ENCODE measurements at regions of chr5 and their contacts with region 1.

Region 1: GRCh38 chr5:15597804-15598203 is 97.8 kb downstream of the FBXL7 start:
- DNase-seq: no peak
- ATAC-seq: no peak
- H3K4me3 ChIP-seq: no peak overlapping the region
- H3K27ac ChIP-seq: no peak overlapping the region
- H3K4me1 ChIP-seq: no peaks in the 10 kb centered on the region
- H3K27me3 ChIP-seq: no peaks in the 10 kb centered on the region
- CTCF ChIP-seq: no peak

Region 2: GRCh38 chr5:15618938-15619337 is 21.1 kb after region 1 on chr5:
- CTCF ChIA-PET with region 1: interaction called, 13 read pairs
- POLR2A ChIA-PET with region 1: no interaction called
- in situ Hi-C with region 1: no loop called
- intact Hi-C with region 1: no loop called
- DNase-seq: no peak
- ATAC-seq: no peak
- H3K4me3 ChIP-seq: no peak overlapping the region
- H3K27ac ChIP-seq: no peak overlapping the region
- H3K4me1 ChIP-seq: no peaks in the 10 kb centered on the region
- H3K27me3 ChIP-seq: no peaks in the 10 kb centered on the region
- CTCF ChIP-seq: no peak

Region 3: DNA sequence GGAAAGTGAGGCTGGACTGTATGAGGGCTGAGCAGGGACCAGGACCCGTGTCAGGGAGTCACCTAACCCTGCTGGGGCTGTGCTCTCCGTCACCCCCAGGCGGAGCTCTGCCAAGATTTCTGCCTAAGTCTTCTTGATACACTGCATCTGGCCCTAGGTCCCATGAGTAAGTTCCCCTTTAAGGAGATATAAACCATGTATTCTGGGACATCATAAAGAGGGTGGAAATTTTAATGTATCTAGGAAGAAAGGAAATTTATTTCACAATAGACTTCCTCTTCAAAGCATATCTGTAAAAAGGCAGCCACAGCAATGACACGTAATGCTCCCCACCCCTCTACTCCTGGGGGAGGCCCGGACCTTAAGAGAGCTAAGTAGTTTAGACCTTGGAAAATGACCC is 85.5 kb after region 1 on chr5:
- CTCF ChIA-PET with region 1: no interaction called
- POLR2A ChIA-PET with region 1: interaction called, 10 read pairs
- in situ Hi-C with region 1: no loop called
- intact Hi-C with region 1: no loop called
- DNase-seq: no peak
- ATAC-seq: no peak
- H3K4me3 ChIP-seq: no peak overlapping the region
- H3K27ac ChIP-seq: no peak overlapping the region
- H3K4me1 ChIP-seq: no peaks in the 10 kb centered on the region
- H3K27me3 ChIP-seq: no peaks in the 10 kb centered on the region
- CTCF ChIP-seq: no peak

Measured in Panc1 (cell line).